Activated CD8-positive, alpha-beta memory T cell treated with anti-CD3 and anti-CD28 coated beads, Interleukin-2, amount 10 ng/mL, durations not matched to agents 7 days and 5 days (primary cell): ENCODE measurements at regions of chr2 and their contacts with region 1.

Region 1: DNA sequence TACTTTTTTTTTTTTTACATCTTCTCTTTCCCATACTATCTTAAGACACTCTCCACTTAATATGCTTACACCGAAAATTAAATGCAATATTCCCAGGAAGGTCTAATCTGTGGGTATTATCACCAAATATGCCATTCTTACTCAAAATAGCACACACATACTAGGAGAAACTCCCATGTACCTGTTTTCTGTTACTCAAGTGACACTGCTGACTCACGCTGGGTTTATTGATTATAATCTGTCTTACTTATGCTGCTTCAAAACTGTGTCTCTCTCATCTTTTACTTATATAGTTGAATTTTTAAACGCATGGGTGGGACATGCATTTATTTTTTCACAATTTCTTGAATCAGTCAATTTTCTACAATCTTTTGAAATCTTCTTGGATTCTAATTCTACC is 29.9 kb downstream of the MRPL19 start:
- DNase-seq: no peak
- ATAC-seq: no peak
- H3K4me3 Mint-ChIP-seq: no peak overlapping the region
- H3K27ac Mint-ChIP-seq: no peak overlapping the region
- H3K4me1 Mint-ChIP-seq: peaks cover 12% of the 10 kb centered on the region
- H3K27me3 Mint-ChIP-seq: no peaks in the 10 kb centered on the region

Region 2: DNA sequence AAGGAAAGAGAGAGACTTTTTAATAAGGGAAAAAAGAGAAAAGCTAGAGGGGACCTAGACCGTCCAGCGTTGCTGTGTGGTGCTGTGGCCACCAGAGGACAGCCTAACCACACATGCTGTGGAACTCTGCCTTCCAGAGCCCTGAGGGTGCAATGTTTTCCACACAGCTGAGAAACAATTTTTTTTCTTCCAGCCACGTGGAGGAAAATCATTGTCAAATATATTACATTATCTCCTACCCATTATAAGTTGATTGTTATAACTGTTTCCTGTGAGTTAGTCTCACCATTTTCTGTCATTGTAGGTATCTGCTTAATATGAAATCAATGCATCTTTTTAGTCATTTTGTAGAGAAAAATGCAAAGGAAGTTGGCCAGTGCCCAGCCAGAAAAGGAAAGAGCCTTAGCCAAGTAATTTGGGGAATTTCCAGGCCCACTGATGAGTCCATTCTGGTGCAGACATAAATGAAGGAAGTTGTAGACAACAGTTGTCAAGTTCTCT is 35.8 kb before region 1 on chr2:
- CTCF ChIA-PET with region 1: interaction called, 35 read pairs
- DNase-seq: peak; percentile 68
- ATAC-seq: peak; percentile 89
- H3K4me3 Mint-ChIP-seq: no peak overlapping the region
- H3K27ac Mint-ChIP-seq: no peak overlapping the region
- H3K4me1 Mint-ChIP-seq: no peaks in the 10 kb centered on the region
- H3K27me3 Mint-ChIP-seq: peaks cover 22% of the 10 kb centered on the region

Region 3: GRCh38 chr2:75646583-75647425 is 29.7 kb before region 1 on chr2 and contains the start of gene MRPL19:
- CTCF ChIA-PET with region 1: interaction called, 35 read pairs
- DNase-seq: peak; percentile 85
- ATAC-seq: peak; percentile 99
- H3K4me3 Mint-ChIP-seq: peak within 1 kb of the TSS; percentile 89
- H3K27ac Mint-ChIP-seq: peak within 1 kb of the TSS; percentile 92
- H3K4me1 Mint-ChIP-seq: peaks cover 24% of the 10 kb centered on the region
- H3K27me3 Mint-ChIP-seq: peaks cover 2% of the 10 kb centered on the region
- total RNA-seq, gene MRPL19: 38.2 to 50.4 TPM